Activated CD4-positive, alpha-beta T cell treated with anti-CD3 and anti-CD28 coated beads, Interleukin-2, amount 10 ng/mL, durations not matched to agents 24 days and 14 days (primary cell): ENCODE measurements at regions of chr9 and their contacts with region 1.

Region 1: DNA sequence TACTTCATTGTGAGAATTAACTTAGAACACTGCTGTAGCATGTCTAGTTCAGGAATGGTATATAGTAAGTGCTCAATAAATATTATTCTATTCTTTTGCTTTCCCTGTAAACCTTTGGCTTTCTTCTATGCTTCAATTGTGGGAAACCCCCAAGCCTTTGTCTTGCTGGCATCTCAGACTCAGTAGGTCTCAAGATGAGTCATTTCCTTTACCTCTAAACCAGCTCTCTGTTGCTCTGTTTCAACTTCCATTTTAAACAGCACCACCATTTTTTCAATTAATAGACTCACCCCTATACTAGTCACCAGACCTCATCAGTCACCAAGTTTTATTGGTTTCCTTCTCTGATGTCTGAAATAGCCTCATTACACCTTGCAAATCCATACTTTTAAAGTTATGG is 43.5 kb downstream of the DMAC1 start:
- DNase-seq: peak; percentile 80
- H3K4me3 Mint-ChIP-seq: peak overlapping the region; percentile 39
- H3K27ac Mint-ChIP-seq: peak overlapping the region; percentile 84
- H3K4me1 Mint-ChIP-seq: peaks cover 22% of the 10 kb centered on the region
- H3K27me3 Mint-ChIP-seq: peaks cover 1% of the 10 kb centered on the region

Region 2: DNA sequence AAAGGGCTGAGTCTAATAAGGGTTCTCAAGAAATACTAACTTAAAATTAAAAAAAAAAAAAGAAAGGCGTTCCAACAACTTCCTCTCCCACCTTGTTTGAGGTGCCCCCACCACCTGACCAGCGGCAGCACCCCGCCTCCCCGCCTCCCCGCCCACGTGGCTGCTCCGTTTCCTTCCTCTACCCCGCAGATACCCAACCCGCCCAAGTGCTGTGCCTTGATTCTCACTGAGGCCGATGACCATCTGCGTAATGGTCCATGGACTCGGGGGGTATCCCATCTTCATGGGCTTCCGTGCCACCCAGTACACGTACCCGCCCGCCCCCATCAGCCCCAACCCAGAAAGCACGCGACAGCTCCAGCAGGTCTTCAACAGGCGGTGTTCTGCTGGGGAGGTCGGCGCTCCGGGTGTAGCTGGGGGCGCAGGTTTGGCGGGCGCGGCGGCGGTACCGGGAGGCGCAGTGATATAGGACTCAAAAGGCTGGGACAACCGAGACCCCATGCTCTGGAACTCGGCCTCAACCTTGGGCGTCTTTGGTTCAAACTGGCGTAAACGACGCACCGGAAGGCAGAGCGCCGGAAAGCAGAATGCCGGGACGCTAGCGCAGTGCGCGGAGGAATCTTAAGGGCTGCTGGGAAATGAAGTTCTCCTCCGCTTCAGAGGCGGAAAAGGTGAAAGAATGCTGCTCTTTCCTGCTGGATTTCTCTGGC is 43.3 kb after region 1 on chr9 and contains the start of gene DMAC1:
- intact Hi-C with region 1: loop called (anchors 1 kb)
- DNase-seq: peak; percentile 93
- H3K4me3 Mint-ChIP-seq: peak within 1 kb of the TSS; percentile 95
- H3K27ac Mint-ChIP-seq: peak within 1 kb of the TSS; percentile 95
- H3K4me1 Mint-ChIP-seq: peaks cover 15% of the 10 kb centered on the region
- H3K27me3 Mint-ChIP-seq: peaks cover under 1% of the 10 kb centered on the region
- total RNA-seq, gene DMAC1: 44.2 and 51.6 TPM in 2 replicates